GM13977 (cell line): ENCODE measurements at regions of chr2 and their contacts with region 1.

Region 1: GRCh38 chr2:60152226-60152833 is 401.1 kb downstream of the BCL11A start:
- DNase-seq: peak; percentile 27
- CTCF ChIP-seq: peak; percentile 68

Region 2: DNA sequence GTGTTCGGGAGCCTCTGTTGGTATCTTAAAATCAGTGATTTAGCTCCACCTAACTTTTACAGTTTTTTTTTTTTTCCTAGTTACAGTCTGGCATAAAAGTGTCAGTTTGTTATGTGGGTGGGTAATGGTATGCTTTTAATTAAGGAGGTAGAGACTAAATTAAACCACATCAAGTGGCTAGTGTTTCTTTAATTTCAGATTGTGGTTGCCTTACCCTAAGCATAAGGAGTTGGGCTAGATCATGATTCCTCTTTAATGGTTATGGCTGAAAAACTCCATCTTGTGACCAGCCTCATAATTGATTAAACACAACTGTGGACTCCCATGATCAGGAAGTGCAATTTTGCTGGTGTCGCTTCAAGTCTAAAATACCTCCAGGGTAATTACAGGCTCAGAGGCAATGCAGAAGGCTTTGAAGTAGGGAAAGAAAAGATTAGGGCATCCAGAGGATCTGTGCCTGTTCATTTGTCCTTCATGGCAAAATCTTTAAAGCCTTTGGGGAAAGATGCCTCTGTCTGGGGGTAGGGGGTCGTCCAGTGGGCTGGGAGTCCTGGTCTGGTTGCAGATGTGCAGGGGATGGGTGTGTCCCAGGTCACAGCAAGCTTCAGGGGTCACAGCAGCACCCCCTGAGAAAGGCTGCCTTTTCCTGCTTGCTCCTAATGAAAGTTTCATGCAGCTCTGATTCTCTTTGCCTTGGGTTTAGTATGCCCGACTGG is 178.1 kb before region 1 on chr2:
- in situ Hi-C with region 1: no loop called
- DNase-seq: no peak
- CTCF ChIP-seq: no peak

Region 3: GRCh38 chr2:60285626-60286316 is 133.4 kb after region 1 on chr2:
- in situ Hi-C with region 1: no loop called
- DNase-seq: no peak
- CTCF ChIP-seq: no peak

Region 4: GRCh38 chr2:60353863-60354262 is 201.5 kb after region 1 on chr2:
- in situ Hi-C with region 1: no loop called
- DNase-seq: peak; percentile 35
- CTCF ChIP-seq: no peak

Region 5: DNA sequence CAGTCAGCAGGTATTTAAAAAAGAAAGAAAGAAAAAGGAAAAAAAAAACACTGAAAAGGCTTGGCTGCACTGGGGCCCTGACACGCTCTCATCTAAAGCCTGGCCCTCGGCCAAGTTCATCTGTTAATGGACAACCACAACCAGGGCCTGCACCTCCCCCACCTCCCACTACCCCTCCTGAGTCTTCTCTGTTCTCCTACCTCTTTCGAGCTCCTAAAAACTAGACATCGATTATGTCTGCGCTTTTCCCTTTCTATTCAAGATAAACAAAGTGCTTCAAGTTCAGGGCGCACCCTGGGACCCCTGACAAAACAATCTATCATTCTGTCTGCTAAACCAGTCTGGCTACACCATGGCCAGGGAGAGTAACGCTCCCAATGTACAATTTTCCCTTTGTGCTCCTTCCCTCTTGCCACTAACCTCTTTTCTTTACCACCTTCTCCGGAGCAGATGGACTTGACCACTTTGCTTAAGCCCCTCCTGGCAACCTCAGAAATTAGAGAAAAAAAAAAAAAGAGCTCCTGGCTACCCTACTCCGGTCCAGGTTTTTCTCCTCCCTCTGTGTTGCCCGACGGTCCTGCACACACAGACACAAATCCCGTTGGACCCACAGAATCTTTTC is 378.4 kb after region 1 on chr2:
- in situ Hi-C with region 1: loop called (anchors 25 kb)
- DNase-seq: no peak
- CTCF ChIP-seq: no peak

Region 6: DNA sequence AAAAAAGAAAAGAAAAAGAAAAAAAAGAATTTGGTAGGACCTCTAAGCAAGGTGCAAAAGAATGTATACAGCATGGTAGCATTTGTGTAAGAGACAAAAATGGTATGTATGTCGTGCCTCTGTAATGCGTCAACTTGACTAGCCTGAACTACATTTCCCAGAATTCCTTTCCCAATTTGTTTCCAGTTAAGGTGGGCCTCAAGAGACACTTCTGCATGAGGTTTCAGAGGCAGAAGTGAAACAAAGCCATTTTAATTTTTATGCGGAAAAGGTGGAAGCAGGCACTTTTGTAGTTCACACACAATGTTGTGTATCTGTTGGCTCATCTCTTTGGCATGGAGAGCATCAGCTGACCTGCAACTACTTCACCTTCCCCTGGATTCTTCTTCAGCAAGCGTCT is 547.3 kb after region 1 on chr2:
- in situ Hi-C with region 1: no loop called
- DNase-seq: no peak
- CTCF ChIP-seq: no peak